Naive thymus-derived CD4-positive, alpha-beta T cell (primary cell): ENCODE measurements at regions of chr9 and their contacts with region 1.

Region 1: DNA sequence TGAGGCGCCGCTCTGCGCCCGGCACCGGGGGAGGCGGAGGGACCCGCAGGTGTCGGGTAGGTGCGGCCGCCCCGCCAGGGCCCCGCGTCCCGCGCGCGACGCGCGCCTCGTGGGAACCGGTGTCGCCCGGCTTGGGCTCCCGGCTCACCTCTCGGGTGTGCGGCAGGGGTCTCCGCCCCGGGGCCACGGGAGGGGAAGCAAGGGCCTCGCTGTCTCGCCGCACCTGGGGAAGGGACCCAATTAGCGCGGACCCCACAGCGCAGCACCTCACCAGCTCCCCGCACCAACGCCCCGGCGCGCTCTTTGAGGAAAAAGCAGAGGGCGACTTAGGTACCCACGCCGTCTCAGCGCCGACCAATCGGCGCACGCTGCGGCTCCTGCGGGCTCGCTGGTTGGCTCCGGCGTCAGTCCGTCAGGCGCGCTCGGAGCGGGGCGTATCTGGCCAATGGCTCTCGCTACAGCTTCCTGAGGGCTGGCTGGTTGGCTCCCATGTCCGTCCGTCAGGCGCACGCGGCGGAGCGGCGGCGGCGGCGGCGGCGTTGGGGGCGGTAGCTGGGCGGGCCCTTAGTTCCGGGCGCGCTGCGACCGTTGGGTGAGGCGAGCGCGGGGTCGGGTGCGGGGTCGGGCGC is at the start of gene TRAF2:
- DNase-seq: peak; percentile 93 to 98 (median 96)
- ATAC-seq: peak; percentile 95
- H3K4me3 ChIP-seq: peak within 1 kb of the TSS; percentile 76
- H3K4me3 Mint-ChIP-seq: peak within 1 kb of the TSS; percentile 83 to 99 (median 86)
- H3K27ac ChIP-seq: peak within 1 kb of the TSS; percentile 97
- H3K27ac Mint-ChIP-seq: peak within 1 kb of the TSS; percentile 78 to 95 (median 89)
- H3K4me1 ChIP-seq: peaks cover 26 to 29% of the 10 kb centered on the region in 2 donors
- H3K4me1 Mint-ChIP-seq: peaks cover 17 to 53% (median 37%) of the 10 kb centered on the region in 7 donors
- H3K27me3 ChIP-seq: no peaks in the 10 kb centered on the region
- H3K27me3 Mint-ChIP-seq: no peaks in the 10 kb centered on the region
- total RNA-seq, gene TRAF2: 14.6 to 72.8 (median 29.6) TPM

Region 2: DNA sequence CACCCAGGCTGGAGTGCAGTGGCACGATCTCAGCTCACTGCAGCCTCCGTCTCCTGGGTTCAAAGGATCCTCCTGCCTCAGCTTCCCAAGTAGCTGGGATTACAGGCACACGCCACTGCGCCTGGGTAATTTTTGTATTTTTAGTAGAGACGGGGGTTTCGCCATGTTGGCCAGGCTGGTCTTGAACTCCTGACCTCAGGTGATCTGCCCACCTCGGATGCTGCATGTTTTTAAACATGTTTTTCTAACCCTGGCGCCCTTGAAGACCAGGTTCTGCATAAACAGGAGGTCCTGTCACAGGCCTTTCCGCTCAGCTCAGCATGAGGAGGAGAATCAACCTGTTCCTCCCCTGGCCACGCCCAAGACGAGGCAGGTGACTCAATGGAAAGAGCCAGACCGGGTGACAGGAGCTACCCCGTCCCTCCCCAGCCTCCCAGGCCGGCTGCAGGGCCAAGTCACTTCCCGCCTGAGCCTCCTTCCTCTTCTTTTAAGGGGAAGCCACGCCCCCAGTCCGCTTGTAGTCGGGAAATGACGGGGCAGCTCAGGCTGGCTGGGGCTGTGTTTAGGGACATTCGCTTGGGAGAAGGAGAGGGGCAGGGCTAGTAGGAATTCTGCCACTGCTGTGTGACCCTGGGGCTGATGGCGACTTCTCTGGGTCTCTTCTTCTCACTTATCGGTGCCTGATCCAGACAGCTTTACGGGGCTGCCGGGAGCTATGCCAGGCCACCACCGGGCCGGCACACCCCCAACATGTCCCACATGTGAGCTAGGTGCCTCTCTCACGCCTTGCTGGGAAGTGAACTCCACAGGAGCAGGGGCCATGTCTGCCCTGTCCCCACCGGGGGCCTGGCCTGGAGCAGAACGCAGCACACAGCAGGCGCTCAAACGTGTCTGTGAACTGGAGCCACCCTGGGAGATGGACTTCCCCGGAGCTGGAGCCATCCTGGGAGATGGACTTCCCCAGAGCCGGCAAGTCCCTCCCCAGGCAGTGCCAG is 346.3 kb before region 1 on chr9:
- CTCF ChIA-PET with region 1: no interaction called
- POLR2A ChIA-PET with region 1: no interaction called
- intact Hi-C with region 1: loop called in 1 of 2 experiments (anchors 10 kb)
- DNase-seq: peak; percentile 50 to 92 (median 80)
- ATAC-seq: peak; percentile 79
- H3K4me3 ChIP-seq: peak overlapping the region; percentile 65
- H3K4me3 Mint-ChIP-seq: peak overlapping the region; percentile 78 to 97 (median 85)
- H3K27ac ChIP-seq: peak overlapping the region; percentile 80
- H3K27ac Mint-ChIP-seq: peak overlapping the region; percentile 90 to 99 (median 99)
- H3K4me1 ChIP-seq: peaks cover 61 to 70% of the 10 kb centered on the region in 2 donors
- H3K4me1 Mint-ChIP-seq: peaks cover 24 to 73% (median 48%) of the 10 kb centered on the region in 7 donors
- H3K27me3 ChIP-seq: no peaks in the 10 kb centered on the region
- H3K27me3 Mint-ChIP-seq: no peaks in the 10 kb centered on the region

Region 3: GRCh38 chr9:136849038-136849959 is 36.8 kb before region 1 on chr9 and contains the start of gene PHPT1:
- CTCF ChIA-PET with region 1: no interaction called
- POLR2A ChIA-PET with region 1: interaction called, 5 read pairs
- intact Hi-C with region 1: loop called (anchors 1 kb)
- DNase-seq: peak; percentile 91 to 98 (median 97)
- ATAC-seq: peak; percentile 96
- H3K4me3 ChIP-seq: peak within 1 kb of the TSS; percentile 99
- H3K4me3 Mint-ChIP-seq: peak within 1 kb of the TSS; percentile 86 to 97 (median 92)
- H3K27ac ChIP-seq: peak within 1 kb of the TSS; percentile 71
- H3K27ac Mint-ChIP-seq: peak within 1 kb of the TSS; percentile 40 to 94 (median 88)
- H3K4me1 ChIP-seq: peaks cover 15 to 17% of the 10 kb centered on the region in 2 donors
- H3K4me1 Mint-ChIP-seq: peaks cover 0 to 16% (median 10%) of the 10 kb centered on the region in 7 donors
- H3K27me3 ChIP-seq: no peaks in the 10 kb centered on the region
- H3K27me3 Mint-ChIP-seq: peaks cover 0 to 21% (median 0%) of the 10 kb centered on the region in 5 donors
- total RNA-seq, gene PHPT1: 17.7 to 167 (median 27.7) TPM

Region 4: GRCh38 chr9:136902259-136902821 is 16.3 kb after region 1 on chr9:
- CTCF ChIA-PET with region 1: interaction called, 4 read pairs
- POLR2A ChIA-PET with region 1: interaction called, 7 read pairs
- intact Hi-C with region 1: loop called (anchors 1 kb)
- DNase-seq: peak; percentile 38 to 91 (median 66)
- ATAC-seq: peak; percentile 93
- H3K4me3 ChIP-seq: peak overlapping the region; percentile 24
- H3K4me3 Mint-ChIP-seq: peak overlapping the region; percentile 62 to 81 (median 75)
- H3K27ac ChIP-seq: peak overlapping the region; percentile 76
- H3K27ac Mint-ChIP-seq: peak overlapping the region; percentile 89 to 98 (median 94)
- H3K4me1 ChIP-seq: peaks cover 26 to 30% of the 10 kb centered on the region in 2 donors
- H3K4me1 Mint-ChIP-seq: peaks cover 12 to 59% (median 36%) of the 10 kb centered on the region in 7 donors
- H3K27me3 ChIP-seq: no peaks in the 10 kb centered on the region
- H3K27me3 Mint-ChIP-seq: no peaks in the 10 kb centered on the region

Region 5: GRCh38 chr9:137129456-137130175 is 243.6 kb after region 1 on chr9:
- CTCF ChIA-PET with region 1: no interaction called
- POLR2A ChIA-PET with region 1: no interaction called
- intact Hi-C with region 1: loop called in 1 of 2 experiments (anchors 1 kb)
- DNase-seq: peak; percentile 74 to 93 (median 90)
- ATAC-seq: peak; percentile 98
- H3K4me3 ChIP-seq: peak overlapping the region; percentile 85
- H3K4me3 Mint-ChIP-seq: peak overlapping the region; percentile 83 to 93 (median 90)
- H3K27ac ChIP-seq: peak overlapping the region; percentile 85
- H3K27ac Mint-ChIP-seq: peak overlapping the region; percentile 67 to 88 (median 81)
- H3K4me1 ChIP-seq: peaks cover 21 to 28% of the 10 kb centered on the region in 2 donors
- H3K4me1 Mint-ChIP-seq: peaks cover 23 to 34% (median 27%) of the 10 kb centered on the region in 7 donors
- H3K27me3 ChIP-seq: no peaks in the 10 kb centered on the region
- H3K27me3 Mint-ChIP-seq: peaks cover 9 to 10% (median 9%) of the 10 kb centered on the region in 5 donors